ENCODE measurements at regions of chr14 and their contacts with region 1.

Region 1: DNA sequence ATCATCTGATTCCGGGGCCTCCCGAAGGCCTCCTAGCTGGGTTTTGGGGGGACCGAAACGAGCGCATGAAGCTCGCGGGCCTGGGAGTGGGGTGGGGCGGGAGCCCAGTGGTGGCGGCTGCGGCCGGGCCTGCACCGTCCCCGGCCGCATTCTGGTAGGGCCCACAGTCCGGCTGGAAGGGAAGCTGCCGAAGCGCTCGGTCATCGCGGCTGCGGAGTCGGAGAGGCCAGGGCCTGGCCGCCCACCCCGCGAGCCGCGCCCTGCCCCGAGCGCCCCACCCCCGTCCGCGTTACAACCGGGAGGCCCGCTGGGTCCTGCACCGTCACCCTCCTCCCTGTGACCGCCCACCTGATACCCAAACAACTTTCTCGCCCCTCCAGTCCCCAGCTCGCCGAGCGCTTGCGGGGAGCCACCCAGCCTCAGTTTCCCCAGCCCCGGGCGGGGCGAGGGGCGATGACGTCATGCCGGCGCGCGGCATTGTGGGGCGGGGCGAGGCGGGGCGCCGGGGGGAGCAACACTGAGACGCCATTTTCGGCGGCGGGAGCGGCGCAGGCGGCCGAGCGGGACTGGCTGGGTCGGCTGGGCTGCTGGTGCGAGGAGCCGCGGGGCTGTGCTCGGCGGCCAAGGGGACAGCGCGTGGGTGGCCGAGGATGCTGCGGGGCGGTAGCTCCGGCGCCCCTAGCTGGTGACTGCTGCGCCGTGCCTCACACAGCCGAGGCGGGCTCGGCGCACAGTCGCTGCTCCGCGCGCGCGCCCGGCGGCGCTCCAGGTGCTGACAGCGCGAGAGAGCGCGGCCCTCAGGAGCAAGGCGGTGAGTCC is at the start of gene KLC1:
- DNase-seq: peak; percentile 70 to 92 (median 80)
- H3K4me3 ChIP-seq: peak within 1 kb of the TSS; percentile 72 to 99 (median 93)
- H3K27ac ChIP-seq: peak within 1 kb of the TSS; percentile 89 to 99 (median 97)
- H3K27me3 ChIP-seq: no peaks in the 10 kb centered on the region
- CTCF ChIP-seq: peak in 20 of 56 donors; percentile 5 to 33 (median 20)
- total RNA-seq, gene KLC1: 362 to 692 (median 542) TPM

Region 2: GRCh38 chr14:103699901-103700752 is 71.2 kb after region 1 on chr14:
- intact Hi-C with region 1: loop called in 1 of 2 experiments (anchors 10 kb)
- DNase-seq: peak in 9 of 10 donors; percentile 62 to 82 (median 76)
- H3K4me3 ChIP-seq: no peak overlapping the region
- H3K27ac ChIP-seq: peak overlapping the region; percentile 7 to 96 (median 90)
- H3K27me3 ChIP-seq: no peaks in the 10 kb centered on the region
- CTCF ChIP-seq: peak in 1 of 56 donors; percentile 18

Region 3: GRCh38 chr14:103715052-103716000 is 86.4 kb after region 1 on chr14 and contains the starts of genes XRCC3 and ZFYVE21:
- intact Hi-C with region 1: loop called in 1 of 2 experiments (anchors 5 kb)
- DNase-seq: peak; percentile 98 to 100 (median 99)
- H3K4me3 ChIP-seq: peak within 1 kb of the TSS; percentile 64 to 97 (median 84)
- H3K27ac ChIP-seq: peak within 1 kb of the TSS in 50 of 59 donors; percentile 10 to 99 (median 71)
- H3K27me3 ChIP-seq: no peaks in the 10 kb centered on the region
- CTCF ChIP-seq: peak in 5 of 56 donors; percentile 7 to 33 (median 13)
- total RNA-seq, gene XRCC3: 4.7 to 19.1 (median 9.9) TPM
- total RNA-seq, gene ZFYVE21: 71.0 to 188 (median 111) TPM

Measured in dorsolateral prefrontal cortex (tissue), 120 donors.